Body of pancreas (tissue), 4 donors: ENCODE measurements at regions of chr1 and their contacts with region 1.

Region 1: GRCh38 chr1:117527566-117528102 is 78.2 kb upstream of the TENT5C start:
- DNase-seq: no peak
- ATAC-seq: no peak
- H3K4me3 ChIP-seq: no peak overlapping the region
- H3K27ac ChIP-seq: peak overlapping the region in 1 of 4 donors; percentile 29
- H3K4me1 ChIP-seq: peaks cover 7% of the 10 kb centered on the region
- H3K27me3 ChIP-seq: no peaks in the 10 kb centered on the region
- CTCF ChIP-seq: no peak
- POLR2A ChIP-seq: no peak

Region 2: GRCh38 chr1:117895482-117896114 is 368.0 kb after region 1 on chr1:
- intact Hi-C with region 1: loop called (anchors 10 kb)
- DNase-seq: peak; percentile 76 to 85 (median 83)
- ATAC-seq: peak; percentile 81
- H3K4me3 ChIP-seq: no peak overlapping the region
- H3K27ac ChIP-seq: peak overlapping the region in 1 of 4 donors; percentile 73
- H3K4me1 ChIP-seq: peaks cover 57% of the 10 kb centered on the region
- H3K27me3 ChIP-seq: no peaks in the 10 kb centered on the region
- CTCF ChIP-seq: peak; percentile 54 to 88 (median 79)
- POLR2A ChIP-seq: no peak

Region 3: DNA sequence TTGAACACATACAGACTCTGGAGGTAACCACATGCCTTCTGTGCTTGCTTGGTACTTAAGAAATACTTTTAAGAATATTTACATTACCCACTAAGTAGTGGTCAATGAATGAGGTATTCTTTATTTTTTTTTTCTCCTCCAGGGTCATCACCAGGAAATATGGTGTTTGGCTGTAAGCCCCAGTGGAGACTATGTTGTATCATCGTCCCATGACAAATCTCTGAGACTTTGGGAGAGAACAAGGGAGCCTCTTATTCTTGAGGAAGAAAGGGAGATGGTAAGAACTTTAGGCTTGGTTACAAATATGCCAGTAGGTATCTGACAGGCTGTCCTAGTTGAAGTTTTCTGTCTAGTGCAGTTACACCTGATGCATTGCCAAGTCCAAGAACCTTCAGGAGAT is 424.8 kb after region 1 on chr1:
- intact Hi-C with region 1: no loop called
- DNase-seq: no peak
- ATAC-seq: no peak
- H3K4me3 ChIP-seq: no peak overlapping the region
- H3K27ac ChIP-seq: no peak overlapping the region
- H3K4me1 ChIP-seq: no peaks in the 10 kb centered on the region
- H3K27me3 ChIP-seq: no peaks in the 10 kb centered on the region
- CTCF ChIP-seq: no peak
- POLR2A ChIP-seq: no peak